Activated CD4-positive, alpha-beta T cell treated with anti-CD3 and anti-CD28 coated beads, Interleukin-2, amount 10 ng/mL, durations not matched to agents 24 days and 14 days (primary cell): ENCODE measurements at regions of chr15 and their contacts with region 1.

Region 1: DNA sequence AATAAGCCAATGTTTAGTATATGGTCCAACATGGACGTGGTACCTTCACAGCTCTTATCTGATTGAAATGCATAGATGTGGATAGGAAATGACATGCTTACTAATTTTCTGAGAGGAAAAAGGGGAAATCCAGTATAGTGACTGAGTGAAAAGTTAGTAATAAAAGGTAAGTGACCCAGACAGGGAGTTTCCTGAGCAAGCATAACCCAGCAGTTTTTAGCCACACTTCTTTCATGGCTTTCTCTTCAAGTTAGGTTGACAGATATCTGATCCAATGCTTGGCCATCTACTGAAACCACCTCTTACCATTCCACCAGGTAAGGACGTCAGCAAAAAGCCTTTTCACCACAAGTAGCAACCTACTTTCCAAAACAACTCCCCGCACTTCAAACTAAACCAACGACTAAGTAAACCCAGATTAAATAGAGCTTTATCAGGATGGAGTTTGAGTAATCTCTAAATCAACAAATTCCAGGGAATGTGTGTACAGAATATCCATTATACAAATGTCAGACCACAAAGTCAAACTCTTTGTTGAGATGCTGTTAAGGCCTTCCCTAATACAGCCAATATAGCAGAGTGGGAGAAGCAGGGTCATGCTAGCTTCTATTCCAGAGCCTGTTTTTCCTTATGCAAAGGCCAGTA is 329.7 kb downstream of the RORA start:
- DNase-seq: peak; percentile 80
- H3K4me3 Mint-ChIP-seq: peak overlapping the region; percentile 43
- H3K27ac Mint-ChIP-seq: peak overlapping the region; percentile 82
- H3K4me1 Mint-ChIP-seq: peaks cover 49% of the 10 kb centered on the region
- H3K27me3 Mint-ChIP-seq: peaks cover 4% of the 10 kb centered on the region

Region 2: GRCh38 chr15:60478566-60479360 is 420.7 kb before region 1 on chr15 and contains the start of gene ICE2:
- intact Hi-C with region 1: loop called (anchors 1 kb)
- DNase-seq: peak; percentile 99
- H3K4me3 Mint-ChIP-seq: peak within 1 kb of the TSS; percentile 95
- H3K27ac Mint-ChIP-seq: peak within 1 kb of the TSS; percentile 99
- H3K4me1 Mint-ChIP-seq: peaks cover 37% of the 10 kb centered on the region
- H3K27me3 Mint-ChIP-seq: no peaks in the 10 kb centered on the region
- total RNA-seq, gene ICE2: 55.4 and 62.6 TPM in 2 replicates

Region 3: GRCh38 chr15:60695713-60696522 is 203.5 kb before region 1 on chr15:
- intact Hi-C with region 1: loop called (anchors 1 kb)
- DNase-seq: peak; percentile 81
- H3K4me3 Mint-ChIP-seq: peak overlapping the region; percentile 66
- H3K27ac Mint-ChIP-seq: peak overlapping the region; percentile 79
- H3K4me1 Mint-ChIP-seq: peaks cover 42% of the 10 kb centered on the region
- H3K27me3 Mint-ChIP-seq: no peaks in the 10 kb centered on the region

Region 4: GRCh38 chr15:60804986-60805949 is 94.2 kb before region 1 on chr15:
- intact Hi-C with region 1: loop called (anchors 1 kb)
- DNase-seq: no peak
- H3K4me3 Mint-ChIP-seq: no peak overlapping the region
- H3K27ac Mint-ChIP-seq: no peak overlapping the region
- H3K4me1 Mint-ChIP-seq: peaks cover 41% of the 10 kb centered on the region
- H3K27me3 Mint-ChIP-seq: no peaks in the 10 kb centered on the region

Region 5: GRCh38 chr15:60859996-60860494 is 39.4 kb before region 1 on chr15:
- intact Hi-C with region 1: loop called (anchors 5 kb)
- DNase-seq: no peak
- H3K4me3 Mint-ChIP-seq: no peak overlapping the region
- H3K27ac Mint-ChIP-seq: no peak overlapping the region
- H3K4me1 Mint-ChIP-seq: peaks cover 15% of the 10 kb centered on the region
- H3K27me3 Mint-ChIP-seq: no peaks in the 10 kb centered on the region